Body of pancreas (tissue), 4 donors: ENCODE measurements at regions of chr14 and their contacts with region 1.

Region 1: GRCh38 chr14:90903101-90903500 is 86.9 kb upstream of the TTC7B start:
- DNase-seq: peak; percentile 49 to 65 (median 58)
- ATAC-seq: peak; percentile 55
- H3K4me3 ChIP-seq: no peak overlapping the region
- H3K27ac ChIP-seq: no peak overlapping the region
- H3K4me1 ChIP-seq: no peaks in the 10 kb centered on the region
- H3K27me3 ChIP-seq: no peaks in the 10 kb centered on the region
- CTCF ChIP-seq: peak; percentile 9 to 75 (median 71)
- POLR2A ChIP-seq: no peak

Region 2: GRCh38 chr14:91173221-91173670 is 270.1 kb after region 1 on chr14:
- intact Hi-C with region 1: loop called (anchors 5 kb)
- DNase-seq: peak; percentile 89 to 93 (median 90)
- ATAC-seq: peak; percentile 87
- H3K4me3 ChIP-seq: no peak overlapping the region
- H3K27ac ChIP-seq: no peak overlapping the region
- H3K4me1 ChIP-seq: peaks cover 17% of the 10 kb centered on the region
- H3K27me3 ChIP-seq: no peaks in the 10 kb centered on the region
- CTCF ChIP-seq: peak; percentile 80 to 98 (median 87)
- POLR2A ChIP-seq: no peak

Region 3: DNA sequence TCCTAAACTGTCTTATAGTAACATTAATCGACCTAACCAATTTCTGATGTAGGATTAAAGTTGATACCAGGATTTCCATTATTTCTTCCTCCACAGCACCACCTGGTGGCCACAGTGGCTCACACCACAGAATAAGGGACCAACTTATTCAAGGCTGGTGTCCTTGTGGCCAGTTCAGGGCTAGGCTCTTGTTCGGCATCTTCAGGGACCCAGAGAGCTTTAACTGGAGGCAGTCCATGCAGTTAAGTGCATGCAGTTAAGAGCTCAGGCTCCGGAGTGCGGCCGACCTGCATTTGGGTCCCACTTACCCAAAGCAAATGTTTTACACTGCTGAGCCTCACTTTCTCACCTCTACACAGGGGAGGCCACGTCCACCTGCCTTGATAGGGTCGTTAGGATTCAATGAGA is 383.4 kb after region 1 on chr14:
- intact Hi-C with region 1: loop called (anchors 10 kb)
- DNase-seq: peak; percentile 66 to 82 (median 72)
- ATAC-seq: peak; percentile 62
- H3K4me3 ChIP-seq: no peak overlapping the region
- H3K27ac ChIP-seq: no peak overlapping the region
- H3K4me1 ChIP-seq: no peaks in the 10 kb centered on the region
- H3K27me3 ChIP-seq: no peaks in the 10 kb centered on the region
- CTCF ChIP-seq: peak; percentile 66 to 90 (median 84)
- POLR2A ChIP-seq: no peak